ENCODE measurements at regions of chr7 and their contacts with region 1.

Region 1: GRCh38 chr7:5494683-5495561 is 71.3 kb upstream of the TNRC18 start:
- DNase-seq: peak; percentile 84
- ATAC-seq: peak; percentile 87
- H3K4me3 Mint-ChIP-seq: no peak overlapping the region
- H3K27ac Mint-ChIP-seq: no peak overlapping the region
- H3K4me1 Mint-ChIP-seq: peaks cover 26% of the 10 kb centered on the region
- H3K27me3 Mint-ChIP-seq: no peaks in the 10 kb centered on the region
- CTCF ChIP-seq: peak; percentile 95

Region 2: DNA sequence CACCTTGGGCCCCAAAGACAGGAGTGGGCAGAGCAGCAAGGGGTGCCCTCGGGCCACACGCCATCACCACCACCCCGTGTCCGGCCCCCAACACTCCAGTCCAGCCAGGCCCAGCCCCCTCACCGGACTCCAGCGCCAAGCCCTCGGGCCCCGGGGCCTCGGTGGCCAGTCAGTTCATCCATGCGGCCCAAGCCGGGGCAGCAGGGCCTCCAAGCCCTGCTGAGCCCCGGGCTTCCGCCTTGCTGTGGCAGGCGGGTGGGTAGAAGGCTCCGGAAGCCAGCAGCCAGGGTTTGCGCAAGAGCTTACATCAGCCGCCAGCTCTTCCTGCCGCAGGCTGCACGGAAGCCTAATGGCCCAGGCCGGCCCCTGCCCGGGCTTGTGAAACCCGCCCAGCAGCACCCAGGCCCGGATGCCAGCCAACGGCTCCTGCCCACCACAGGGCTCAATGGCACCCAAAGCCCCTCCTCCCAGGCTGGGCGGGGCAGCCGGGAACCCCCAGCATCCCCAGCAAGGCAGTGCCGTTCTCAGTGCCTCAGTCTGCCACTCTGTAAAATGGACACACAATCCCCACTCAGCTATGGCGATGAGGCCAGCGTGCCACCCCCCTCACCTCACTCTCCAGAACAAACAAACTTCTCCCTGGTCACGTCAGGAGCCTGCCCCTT is 97.8 kb before region 1 on chr7:
- CTCF ChIA-PET with region 1: interaction called, 13 read pairs
- POLR2A ChIA-PET with region 1: interaction called, 3 read pairs
- intact Hi-C with region 1: no loop called
- DNase-seq: peak; percentile 95
- ATAC-seq: peak; percentile 91
- H3K4me3 Mint-ChIP-seq: peak overlapping the region; percentile 82
- H3K27ac Mint-ChIP-seq: peak overlapping the region; percentile 92
- H3K4me1 Mint-ChIP-seq: peaks cover 32% of the 10 kb centered on the region
- H3K27me3 Mint-ChIP-seq: no peaks in the 10 kb centered on the region
- CTCF ChIP-seq: no peak

Region 3: GRCh38 chr7:5532520-5533335 is 37.8 kb after region 1 on chr7:
- CTCF ChIA-PET with region 1: interaction called, 14 read pairs
- POLR2A ChIA-PET with region 1: interaction called, 5 read pairs
- intact Hi-C with region 1: no loop called
- DNase-seq: peak; percentile 87
- ATAC-seq: peak; percentile 32
- H3K4me3 Mint-ChIP-seq: peak overlapping the region; percentile 94
- H3K27ac Mint-ChIP-seq: peak overlapping the region; percentile 93
- H3K4me1 Mint-ChIP-seq: peaks cover 19% of the 10 kb centered on the region
- H3K27me3 Mint-ChIP-seq: no peaks in the 10 kb centered on the region
- CTCF ChIP-seq: no peak

Region 4: DNA sequence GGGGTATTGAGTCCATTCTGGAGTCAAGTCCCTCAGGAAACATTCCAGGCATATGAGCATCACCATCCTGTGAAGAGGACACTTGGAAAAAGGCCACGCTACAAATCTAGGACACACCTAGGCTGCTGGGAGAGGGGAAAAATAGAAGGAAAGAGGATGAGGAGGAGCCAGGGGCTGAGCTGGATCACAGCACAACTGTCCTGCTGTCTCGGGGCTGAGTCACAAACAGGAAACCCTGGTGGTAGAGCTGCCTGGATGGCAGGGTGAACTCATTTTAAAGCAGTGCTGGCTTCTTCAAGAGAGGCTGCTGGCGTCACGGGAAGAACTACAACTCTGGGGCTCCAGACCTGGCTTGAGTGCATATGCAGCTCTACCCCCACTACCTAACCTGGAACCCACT is 135.0 kb after region 1 on chr7:
- CTCF ChIA-PET with region 1: interaction called, 18 read pairs
- POLR2A ChIA-PET with region 1: no interaction called
- intact Hi-C with region 1: no loop called
- DNase-seq: peak; percentile 82
- ATAC-seq: peak; percentile 73
- H3K4me3 Mint-ChIP-seq: no peak overlapping the region
- H3K27ac Mint-ChIP-seq: peak overlapping the region; percentile 21
- H3K4me1 Mint-ChIP-seq: peaks cover 38% of the 10 kb centered on the region
- H3K27me3 Mint-ChIP-seq: no peaks in the 10 kb centered on the region
- CTCF ChIP-seq: no peak

Region 5: GRCh38 chr7:5689118-5689517 is 194.2 kb after region 1 on chr7:
- CTCF ChIA-PET with region 1: interaction called, 19 read pairs
- POLR2A ChIA-PET with region 1: no interaction called
- intact Hi-C with region 1: no loop called
- DNase-seq: peak; percentile 87
- ATAC-seq: peak; percentile 65
- H3K4me3 Mint-ChIP-seq: peak overlapping the region; percentile 57
- H3K27ac Mint-ChIP-seq: peak overlapping the region; percentile 97
- H3K4me1 Mint-ChIP-seq: peaks cover 93% of the 10 kb centered on the region
- H3K27me3 Mint-ChIP-seq: no peaks in the 10 kb centered on the region
- CTCF ChIP-seq: no peak

Measured in activated CD8-positive, alpha-beta T cell treated with anti-CD3 and anti-CD28 coated beads for 36 hours (primary cell).